ENCODE measurements at regions of chr2 and their contacts with region 1.

Region 1: GRCh38 chr2:119011162-119011909 is 69.3 kb downstream of the MARCO start:
- DNase-seq: no peak
- H3K4me3 ChIP-seq: no peak overlapping the region
- H3K27ac ChIP-seq: no peak overlapping the region
- H3K4me1 ChIP-seq: no peaks in the 10 kb centered on the region
- H3K27me3 ChIP-seq: peaks cover 16% of the 10 kb centered on the region
- CTCF ChIP-seq: peak; percentile 45 to 77

Region 2: GRCh38 chr2:118763797-118764196 is 247.5 kb before region 1 on chr2:
- CTCF ChIA-PET with region 1: no interaction called
- dilution Hi-C with region 1: no loop called
- in situ Hi-C with region 1: no loop called
- intact Hi-C with region 1: no loop called
- DNase-seq: no peak
- H3K4me3 ChIP-seq: no peak overlapping the region
- H3K27ac ChIP-seq: no peak overlapping the region
- H3K4me1 ChIP-seq: no peaks in the 10 kb centered on the region
- H3K27me3 ChIP-seq: no peaks in the 10 kb centered on the region
- CTCF ChIP-seq: no peak

Region 3: GRCh38 chr2:118913803-118914645 is 97.3 kb before region 1 on chr2:
- CTCF ChIA-PET with region 1: no interaction called
- dilution Hi-C with region 1: no loop called
- in situ Hi-C with region 1: no loop called
- intact Hi-C with region 1: loop called (anchors 10 kb)
- DNase-seq: peak; percentile 83
- H3K4me3 ChIP-seq: no peak overlapping the region
- H3K27ac ChIP-seq: peak overlapping the region; percentile 56
- H3K4me1 ChIP-seq: peaks cover 14% of the 10 kb centered on the region
- H3K27me3 ChIP-seq: no peaks in the 10 kb centered on the region
- CTCF ChIP-seq: no peak

Region 4: GRCh38 chr2:119158563-119159347 is 147.4 kb after region 1 on chr2 and contains the start of gene C1QL2:
- CTCF ChIA-PET with region 1: no interaction called
- dilution Hi-C with region 1: no loop called
- in situ Hi-C with region 1: no loop called
- intact Hi-C with region 1: loop called (anchors 5 kb)
- DNase-seq: peak; percentile 10
- H3K4me3 ChIP-seq: peak within 1 kb of the TSS in 2 of 3 experiments; percentile 5 to 14
- H3K27ac ChIP-seq: no peak within 1 kb of the TSS
- H3K4me1 ChIP-seq: peaks cover 9% of the 10 kb centered on the region
- H3K27me3 ChIP-seq: peaks cover 52% of the 10 kb centered on the region
- CTCF ChIP-seq: peak in 1 of 2 donors; percentile 4
- total RNA-seq, gene C1QL2: not detected

Region 5: GRCh38 chr2:119174216-119175037 is 163.1 kb after region 1 on chr2:
- CTCF ChIA-PET with region 1: no interaction called
- dilution Hi-C with region 1: no loop called
- in situ Hi-C with region 1: no loop called
- intact Hi-C with region 1: loop called (anchors 5 kb)
- DNase-seq: peak; percentile 13
- H3K4me3 ChIP-seq: no peak overlapping the region
- H3K27ac ChIP-seq: no peak overlapping the region
- H3K4me1 ChIP-seq: peaks cover 11% of the 10 kb centered on the region
- H3K27me3 ChIP-seq: no peaks in the 10 kb centered on the region
- CTCF ChIP-seq: peak; percentile 82 to 84

Region 6: DNA sequence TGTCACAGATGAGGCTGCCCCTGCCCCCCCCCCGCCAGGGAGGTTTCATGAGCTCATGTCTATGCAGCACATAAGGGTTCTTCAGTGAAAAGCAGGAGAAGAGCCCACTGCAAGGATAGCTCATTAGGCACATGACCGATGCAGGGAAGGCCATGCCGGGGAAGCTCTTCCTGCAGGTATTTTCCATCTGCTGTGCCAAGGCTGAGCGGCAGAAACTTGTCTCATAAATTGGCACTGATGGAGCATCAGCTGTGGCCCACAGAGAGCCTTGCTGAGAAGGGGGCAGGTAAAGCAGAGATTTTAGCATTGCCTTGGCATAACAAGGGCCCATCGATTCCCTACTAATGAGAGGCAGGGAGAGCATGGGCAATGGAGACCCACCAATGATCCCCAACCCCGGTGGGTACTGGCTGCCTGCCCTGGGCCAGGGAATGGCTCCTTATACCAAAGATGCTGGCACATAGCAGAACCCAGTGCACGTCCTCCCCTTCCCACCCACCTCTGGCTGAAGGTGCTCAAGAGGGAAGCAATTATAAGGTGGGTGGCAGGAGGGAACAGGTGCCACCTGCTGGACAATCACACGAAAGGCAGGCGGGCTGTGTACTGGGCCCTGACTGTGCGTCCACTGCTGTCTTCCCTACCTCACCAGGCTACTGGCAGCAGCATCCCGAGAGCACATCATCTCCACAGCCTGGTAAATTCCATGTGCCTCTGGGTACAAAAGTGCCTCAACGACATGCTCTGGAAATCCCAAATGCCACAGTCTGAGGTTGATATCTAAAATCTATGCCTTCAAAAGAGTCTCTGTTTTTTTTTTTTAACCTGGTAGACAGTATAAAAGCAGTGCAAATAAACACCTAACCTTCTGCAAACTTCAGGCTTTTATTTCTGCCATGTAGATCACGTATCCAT is 253.7 kb after region 1 on chr2:
- CTCF ChIA-PET with region 1: no interaction called
- dilution Hi-C with region 1: no loop called
- in situ Hi-C with region 1: loop called in 1 of 2 experiments (anchors 25 kb)
- intact Hi-C with region 1: loop called (anchors 1 kb)
- DNase-seq: peak; percentile 53
- H3K4me3 ChIP-seq: no peak overlapping the region
- H3K27ac ChIP-seq: no peak overlapping the region
- H3K4me1 ChIP-seq: no peaks in the 10 kb centered on the region
- H3K27me3 ChIP-seq: no peaks in the 10 kb centered on the region
- CTCF ChIP-seq: peak; percentile 88 to 94

Region 7: DNA sequence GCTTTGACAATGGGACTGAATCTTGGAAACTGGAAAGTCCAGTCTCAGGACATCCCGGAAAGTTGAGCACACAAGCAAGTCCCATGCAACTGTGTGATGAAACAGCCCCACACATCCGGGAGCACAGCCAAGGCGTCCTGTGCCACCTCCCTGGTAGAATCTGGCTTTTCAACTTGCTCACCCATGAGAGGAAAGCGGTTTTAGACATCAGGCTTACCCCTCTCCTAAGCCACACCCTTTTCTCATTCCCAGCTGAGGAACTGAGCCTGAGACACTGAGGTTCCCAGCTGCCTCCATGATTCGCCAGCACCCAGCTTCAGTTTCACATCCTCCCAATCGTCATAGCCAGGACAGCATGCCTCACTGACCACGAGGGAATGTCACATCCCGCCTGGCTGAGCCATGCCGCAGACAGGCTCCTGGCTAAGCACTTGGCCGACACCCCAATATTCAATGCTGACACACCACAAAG is 272.6 kb after region 1 on chr2:
- CTCF ChIA-PET with region 1: no interaction called
- dilution Hi-C with region 1: no loop called
- in situ Hi-C with region 1: loop called in 1 of 2 experiments (anchors 10 kb)
- intact Hi-C with region 1: no loop called
- DNase-seq: peak; percentile 95
- H3K4me3 ChIP-seq: peak overlapping the region in 1 of 3 experiments; percentile 6
- H3K27ac ChIP-seq: peak overlapping the region; percentile 57
- H3K4me1 ChIP-seq: peaks cover 14% of the 10 kb centered on the region
- H3K27me3 ChIP-seq: no peaks in the 10 kb centered on the region
- CTCF ChIP-seq: no peak

Region 8: GRCh38 chr2:119290859-119291587 is 279.7 kb after region 1 on chr2:
- CTCF ChIA-PET with region 1: no interaction called
- dilution Hi-C with region 1: no loop called
- in situ Hi-C with region 1: loop called in 1 of 2 experiments (anchors 10 kb)
- intact Hi-C with region 1: loop called (anchors 2 kb)
- DNase-seq: peak; percentile 12
- H3K4me3 ChIP-seq: no peak overlapping the region
- H3K27ac ChIP-seq: no peak overlapping the region
- H3K4me1 ChIP-seq: no peaks in the 10 kb centered on the region
- H3K27me3 ChIP-seq: no peaks in the 10 kb centered on the region
- CTCF ChIP-seq: peak; percentile 24 to 64

Measured in mammary epithelial cell (primary cell).